Activated T-helper 1 cell treated with anti-CD3 and anti-CD28 coated beads, Interleukin-12 subunit alpha, Interleukin-12 subunit beta, Interleukin-2, Interleukin-4 antibody, amounts not matched to agents 30 ng/mL and 10 ng/mL and 1 ng/mL, durations not matched to agents 14 hours and 24 hours and 36 hours (primary cell): ENCODE measurements at regions of chr17 and their contacts with region 1.

Region 1: GRCh38 chr17:2222901-2223616 is 80.5 kb downstream of the SMG6 start:
- DNase-seq: peak; percentile 78
- H3K4me3 Mint-ChIP-seq: peak overlapping the region; percentile 65
- H3K27ac Mint-ChIP-seq: peak overlapping the region; percentile 84
- H3K4me1 Mint-ChIP-seq: peaks cover 60% of the 10 kb centered on the region
- H3K27me3 Mint-ChIP-seq: no peaks in the 10 kb centered on the region

Region 2: GRCh38 chr17:2070241-2071023 is 152.6 kb before region 1 on chr17:
- intact Hi-C with region 1: loop called (anchors 1 kb)
- DNase-seq: peak; percentile 68
- H3K4me3 Mint-ChIP-seq: peak overlapping the region; percentile 58
- H3K27ac Mint-ChIP-seq: peak overlapping the region; percentile 92
- H3K4me1 Mint-ChIP-seq: peaks cover 58% of the 10 kb centered on the region
- H3K27me3 Mint-ChIP-seq: no peaks in the 10 kb centered on the region

Region 3: GRCh38 chr17:2253768-2254406 is 30.8 kb after region 1 on chr17:
- intact Hi-C with region 1: loop called (anchors 1 kb)
- DNase-seq: peak; percentile 53
- H3K4me3 Mint-ChIP-seq: peak overlapping the region; percentile 63
- H3K27ac Mint-ChIP-seq: peak overlapping the region; percentile 97
- H3K4me1 Mint-ChIP-seq: peaks cover 63% of the 10 kb centered on the region
- H3K27me3 Mint-ChIP-seq: no peaks in the 10 kb centered on the region